Endothelial cell of umbilical vein (primary cell): ENCODE measurements at regions of chr17 and their contacts with region 1.

Region 1: DNA sequence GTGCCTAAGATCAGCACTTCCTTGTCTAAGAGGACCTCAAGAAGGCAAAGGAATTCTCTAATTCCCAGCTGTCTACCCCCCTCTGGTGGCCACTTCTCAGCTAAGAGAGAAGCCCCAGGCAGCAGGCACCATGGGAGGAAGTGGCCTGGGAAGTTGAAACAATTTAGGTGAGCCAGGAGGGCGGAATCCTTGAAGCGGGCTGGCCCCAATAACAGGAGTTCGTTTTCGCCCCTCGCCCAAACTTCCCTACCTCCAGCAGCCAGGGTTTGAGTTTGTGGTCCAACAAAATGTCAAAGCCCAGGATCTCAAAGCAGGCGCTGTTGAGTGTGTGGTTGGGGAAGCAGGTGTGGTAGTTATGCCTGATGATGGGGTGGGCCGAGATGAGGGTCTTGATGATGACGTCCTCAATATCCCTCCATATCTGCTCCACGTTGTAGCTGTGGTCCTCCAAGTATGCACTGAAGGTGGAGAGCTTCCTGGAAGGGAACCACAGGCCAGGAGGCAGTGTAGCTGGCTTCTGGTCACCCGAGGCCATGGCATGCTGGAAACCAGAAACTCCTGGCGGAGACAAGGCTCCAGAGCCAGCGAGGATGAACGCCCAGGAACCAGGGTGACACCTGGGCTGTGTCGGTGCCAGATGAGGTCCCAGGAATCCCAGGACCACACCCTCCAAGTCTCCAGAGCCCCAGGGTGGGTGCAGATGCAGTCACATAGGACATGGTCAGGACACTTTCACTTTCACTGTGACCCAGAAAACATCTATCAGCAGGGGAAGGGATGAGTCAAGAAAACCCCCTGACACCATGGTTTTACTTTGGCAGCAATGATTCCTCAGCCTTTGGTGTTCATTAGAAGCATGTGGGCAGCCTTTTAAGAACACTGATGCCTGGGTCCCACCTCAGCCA is 25.6 kb downstream of the TTLL6 start:
- DNase-seq: peak; percentile 79
- H3K4me3 ChIP-seq: no peak overlapping the region
- H3K27ac ChIP-seq: no peak overlapping the region
- H3K4me1 ChIP-seq: no peaks in the 10 kb centered on the region
- H3K27me3 ChIP-seq: peaks cover 9 to 15% of the 10 kb centered on the region in 2 experiments
- CTCF ChIP-seq: peak; percentile 78 to 84
- POLR2A ChIP-seq: no peak

Region 2: DNA sequence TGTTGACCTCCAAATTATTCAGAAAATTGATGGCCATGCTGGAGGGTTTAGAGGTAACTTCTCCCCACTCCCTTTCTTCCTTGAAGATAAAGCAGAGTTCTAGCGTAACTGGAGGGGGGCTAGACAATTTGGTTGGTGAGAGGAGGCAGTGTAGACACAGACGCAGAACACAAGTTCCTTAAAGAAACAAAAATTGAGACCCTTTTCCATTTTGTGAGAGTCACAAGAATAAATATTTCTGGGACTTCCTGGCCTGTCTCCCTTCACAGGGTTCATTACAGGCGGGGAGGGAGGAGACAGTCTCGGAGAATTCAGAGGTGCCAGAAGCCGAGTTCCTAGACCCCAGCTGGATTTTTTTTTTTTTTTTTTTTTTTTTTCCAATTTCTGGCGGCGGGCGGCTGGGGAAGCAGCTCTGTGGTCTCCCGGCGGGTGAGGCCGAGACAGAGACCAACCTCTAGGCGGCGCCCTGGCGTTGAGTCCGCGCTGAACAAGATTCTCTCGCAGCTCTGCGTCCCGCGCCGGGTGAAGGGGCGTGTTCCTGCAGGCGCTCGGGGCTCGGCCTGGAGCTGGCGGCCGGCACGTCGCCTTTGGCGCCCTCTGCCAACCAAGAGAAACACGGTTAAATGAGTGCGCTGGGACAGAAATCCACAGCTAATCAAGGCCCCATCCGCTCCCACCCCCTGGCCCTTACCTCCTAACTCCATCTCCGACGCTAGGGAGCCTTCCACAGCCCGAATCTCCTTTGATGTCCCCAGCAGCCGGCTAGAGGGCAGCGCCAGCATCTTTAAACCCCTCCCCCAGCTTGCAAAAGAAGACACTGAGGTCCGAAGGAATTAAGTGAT is 155.0 kb before region 1 on chr17:
- CTCF ChIA-PET with region 1: interaction called, 11 read pairs
- POLR2A ChIA-PET with region 1: no interaction called
- dilution Hi-C with region 1: no loop called
- intact Hi-C with region 1: no loop called
- DNase-seq: peak; percentile 93
- H3K4me3 ChIP-seq: no peak overlapping the region
- H3K27ac ChIP-seq: no peak overlapping the region
- H3K4me1 ChIP-seq: no peaks in the 10 kb centered on the region
- H3K27me3 ChIP-seq: peaks cover 69 to 85% of the 10 kb centered on the region in 2 experiments
- CTCF ChIP-seq: peak; percentile 89 to 96
- POLR2A ChIP-seq: no peak

Region 3: DNA sequence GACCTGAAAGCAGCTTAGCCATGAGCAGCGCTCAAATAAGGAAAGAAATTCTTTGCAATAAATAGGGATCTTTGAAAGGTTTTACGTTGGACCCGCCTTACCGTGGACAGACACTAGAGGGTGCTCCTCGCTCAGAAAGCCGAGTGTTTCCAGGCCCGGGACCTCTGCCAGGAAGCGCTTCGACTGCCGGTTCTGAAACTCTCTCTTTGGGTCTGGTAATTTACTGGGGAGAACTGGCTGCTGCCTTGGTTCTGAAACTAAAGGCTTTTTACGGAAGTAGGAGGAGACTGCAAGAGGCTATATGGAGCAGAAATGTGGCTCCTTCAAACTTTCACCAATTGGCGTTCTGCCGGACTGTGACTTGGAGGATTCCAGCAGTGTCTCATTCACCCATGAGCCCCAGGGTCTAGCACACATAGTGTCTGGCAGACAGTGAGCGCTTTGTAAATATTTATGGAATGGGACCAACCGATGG is 119.6 kb before region 1 on chr17:
- CTCF ChIA-PET with region 1: interaction called, 220 read pairs
- POLR2A ChIA-PET with region 1: no interaction called
- dilution Hi-C with region 1: no loop called
- intact Hi-C with region 1: loop called (anchors 1 kb)
- DNase-seq: peak; percentile 77
- H3K4me3 ChIP-seq: peak overlapping the region in 1 of 3 experiments; percentile 43
- H3K27ac ChIP-seq: no peak overlapping the region
- H3K4me1 ChIP-seq: no peaks in the 10 kb centered on the region
- H3K27me3 ChIP-seq: peaks cover 12 to 21% of the 10 kb centered on the region in 2 experiments
- CTCF ChIP-seq: peak; percentile 79 to 88
- POLR2A ChIP-seq: no peak

Region 4: GRCh38 chr17:48718761-48719641 is 72.4 kb before region 1 on chr17:
- CTCF ChIA-PET with region 1: interaction called, 312 read pairs
- POLR2A ChIA-PET with region 1: no interaction called
- dilution Hi-C with region 1: no loop called
- intact Hi-C with region 1: loop called (anchors 1 kb)
- DNase-seq: no peak
- H3K4me3 ChIP-seq: no peak overlapping the region
- H3K27ac ChIP-seq: no peak overlapping the region
- H3K4me1 ChIP-seq: peaks cover 8% of the 10 kb centered on the region
- H3K27me3 ChIP-seq: peaks cover 73 to 88% of the 10 kb centered on the region in 2 experiments
- CTCF ChIP-seq: no peak
- POLR2A ChIP-seq: no peak

Region 5: GRCh38 chr17:48729335-48730239 is 61.8 kb before region 1 on chr17:
- CTCF ChIA-PET with region 1: interaction called, 312 read pairs
- POLR2A ChIA-PET with region 1: no interaction called
- dilution Hi-C with region 1: no loop called
- intact Hi-C with region 1: loop called (anchors 1 kb)
- DNase-seq: no peak
- H3K4me3 ChIP-seq: no peak overlapping the region
- H3K27ac ChIP-seq: no peak overlapping the region
- H3K4me1 ChIP-seq: no peaks in the 10 kb centered on the region
- H3K27me3 ChIP-seq: peaks cover 92 to 97% of the 10 kb centered on the region in 2 experiments
- CTCF ChIP-seq: no peak
- POLR2A ChIP-seq: no peak

Region 6: DNA sequence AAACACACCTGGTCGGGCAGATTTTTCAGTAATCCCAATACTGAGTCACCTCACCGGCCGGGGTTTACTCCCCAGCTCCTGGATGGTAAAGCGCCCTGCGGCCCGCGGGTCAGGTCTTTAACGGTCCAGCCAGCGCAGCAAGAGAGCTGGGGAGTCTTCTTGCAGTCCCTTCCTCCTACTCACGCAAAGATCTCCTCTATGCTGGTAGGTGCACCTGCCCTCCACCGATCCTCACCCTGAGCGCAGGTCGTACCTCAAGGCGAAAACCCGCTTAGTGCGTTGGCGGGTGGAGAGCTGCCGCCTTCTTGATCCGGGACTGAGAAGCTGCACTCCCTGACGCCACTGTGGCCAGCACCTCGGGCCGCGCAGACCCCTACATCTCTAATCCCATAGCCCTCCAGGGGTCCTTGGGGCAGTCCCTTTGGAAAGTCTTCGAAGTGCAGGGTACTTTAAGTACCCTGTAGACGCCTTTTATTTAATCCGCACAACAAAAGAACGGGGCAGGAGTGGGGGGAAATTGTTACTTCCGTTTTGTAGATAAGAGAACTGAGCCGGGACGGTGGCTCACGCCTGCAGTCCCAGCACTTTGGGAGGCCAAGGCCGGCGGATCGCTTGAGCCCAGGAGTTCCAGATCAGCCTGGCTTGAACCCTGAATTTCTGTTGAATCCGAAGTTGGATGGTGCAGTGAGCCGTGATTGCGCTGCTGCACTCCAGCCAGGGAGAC is 52.4 kb before region 1 on chr17:
- CTCF ChIA-PET with region 1: interaction called, 12 read pairs
- POLR2A ChIA-PET with region 1: no interaction called
- dilution Hi-C with region 1: no loop called
- intact Hi-C with region 1: no loop called
- DNase-seq: no peak
- H3K4me3 ChIP-seq: no peak overlapping the region
- H3K27ac ChIP-seq: no peak overlapping the region
- H3K4me1 ChIP-seq: no peaks in the 10 kb centered on the region
- H3K27me3 ChIP-seq: peaks cover 82 to 96% of the 10 kb centered on the region in 2 experiments
- CTCF ChIP-seq: no peak
- POLR2A ChIP-seq: no peak

Region 7: DNA sequence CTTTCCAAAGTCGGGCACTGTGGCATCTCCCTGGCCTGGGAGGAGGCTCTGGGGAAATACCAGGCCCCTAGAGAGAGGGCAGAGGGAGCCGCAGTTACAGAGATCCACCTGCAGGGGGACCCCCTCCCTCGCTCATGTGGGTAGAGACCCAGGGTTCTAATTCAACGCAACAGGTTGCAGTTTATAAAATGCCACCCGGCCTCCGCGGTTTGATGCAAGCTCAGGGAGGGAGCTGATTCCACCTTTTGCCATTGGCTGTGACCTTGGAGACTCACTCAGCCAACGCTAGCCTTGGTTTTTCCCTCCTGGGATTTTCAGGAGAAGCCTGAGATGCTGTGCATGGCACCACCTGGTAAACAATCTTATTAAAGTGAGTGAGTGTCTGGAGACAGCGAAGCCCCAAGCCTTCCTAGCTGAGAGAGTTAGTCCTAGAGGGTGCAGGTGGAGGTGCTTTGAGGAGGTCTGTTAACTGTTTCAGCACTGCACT is 13.6 kb after region 1 on chr17:
- CTCF ChIA-PET with region 1: interaction called, 18 read pairs
- POLR2A ChIA-PET with region 1: no interaction called
- dilution Hi-C with region 1: no loop called
- intact Hi-C with region 1: no loop called
- DNase-seq: peak; percentile 47
- H3K4me3 ChIP-seq: no peak overlapping the region
- H3K27ac ChIP-seq: no peak overlapping the region
- H3K4me1 ChIP-seq: no peaks in the 10 kb centered on the region
- H3K27me3 ChIP-seq: peaks cover 2 to 5% of the 10 kb centered on the region in 2 experiments
- CTCF ChIP-seq: peak; percentile 87 to 94
- POLR2A ChIP-seq: no peak